Dorsolateral prefrontal cortex (tissue), 120 donors: ENCODE measurements at regions of chr20 and their contacts with region 1.

Region 1: GRCh38 chr20:25539742-25540672 is 45.3 kb downstream of the NINL start:
- DNase-seq: peak in 8 of 10 donors; percentile 39 to 71 (median 60)
- H3K4me3 ChIP-seq: peak overlapping the region; percentile 31 to 69 (median 54)
- H3K27ac ChIP-seq: peak overlapping the region in 52 of 59 donors; percentile 1 to 86 (median 64)
- H3K27me3 ChIP-seq: no peaks in the 10 kb centered on the region
- CTCF ChIP-seq: peak; percentile 36 to 77 (median 60)

Region 2: GRCh38 chr20:25254986-25255680 is 284.9 kb before region 1 on chr20:
- intact Hi-C with region 1: loop called in 1 of 2 experiments (anchors 10 kb)
- DNase-seq: peak in 6 of 10 donors; percentile 58 to 78 (median 68)
- H3K4me3 ChIP-seq: peak overlapping the region in 9 of 59 donors; percentile 0 to 31 (median 8)
- H3K27ac ChIP-seq: peak overlapping the region in 50 of 59 donors; percentile 5 to 94 (median 59)
- H3K27me3 ChIP-seq: no peaks in the 10 kb centered on the region
- CTCF ChIP-seq: peak in 35 of 56 donors; percentile 10 to 62 (median 29)

Region 3: DNA sequence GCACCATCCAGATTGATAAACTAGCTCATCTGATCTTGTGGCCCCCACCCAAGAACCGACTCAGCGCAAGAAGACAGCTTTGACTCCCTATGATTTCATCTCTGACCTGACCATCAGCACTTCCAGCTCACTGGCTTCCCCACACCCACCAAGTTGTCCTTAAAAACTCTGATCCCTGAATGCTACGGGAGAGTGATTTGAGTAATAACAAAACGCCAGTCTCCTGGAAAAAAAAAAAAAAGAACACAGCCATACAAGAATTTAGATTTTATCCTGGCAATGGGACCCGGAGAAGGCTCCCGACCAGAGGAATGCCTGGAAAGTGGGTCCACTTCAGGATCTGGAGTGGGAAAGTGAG is 212.2 kb before region 1 on chr20:
- intact Hi-C with region 1: loop called in 1 of 2 experiments (anchors 5 kb)
- DNase-seq: no peak
- H3K4me3 ChIP-seq: no peak overlapping the region
- H3K27ac ChIP-seq: no peak overlapping the region
- H3K27me3 ChIP-seq: no peaks in the 10 kb centered on the region
- CTCF ChIP-seq: no peak

Region 4: DNA sequence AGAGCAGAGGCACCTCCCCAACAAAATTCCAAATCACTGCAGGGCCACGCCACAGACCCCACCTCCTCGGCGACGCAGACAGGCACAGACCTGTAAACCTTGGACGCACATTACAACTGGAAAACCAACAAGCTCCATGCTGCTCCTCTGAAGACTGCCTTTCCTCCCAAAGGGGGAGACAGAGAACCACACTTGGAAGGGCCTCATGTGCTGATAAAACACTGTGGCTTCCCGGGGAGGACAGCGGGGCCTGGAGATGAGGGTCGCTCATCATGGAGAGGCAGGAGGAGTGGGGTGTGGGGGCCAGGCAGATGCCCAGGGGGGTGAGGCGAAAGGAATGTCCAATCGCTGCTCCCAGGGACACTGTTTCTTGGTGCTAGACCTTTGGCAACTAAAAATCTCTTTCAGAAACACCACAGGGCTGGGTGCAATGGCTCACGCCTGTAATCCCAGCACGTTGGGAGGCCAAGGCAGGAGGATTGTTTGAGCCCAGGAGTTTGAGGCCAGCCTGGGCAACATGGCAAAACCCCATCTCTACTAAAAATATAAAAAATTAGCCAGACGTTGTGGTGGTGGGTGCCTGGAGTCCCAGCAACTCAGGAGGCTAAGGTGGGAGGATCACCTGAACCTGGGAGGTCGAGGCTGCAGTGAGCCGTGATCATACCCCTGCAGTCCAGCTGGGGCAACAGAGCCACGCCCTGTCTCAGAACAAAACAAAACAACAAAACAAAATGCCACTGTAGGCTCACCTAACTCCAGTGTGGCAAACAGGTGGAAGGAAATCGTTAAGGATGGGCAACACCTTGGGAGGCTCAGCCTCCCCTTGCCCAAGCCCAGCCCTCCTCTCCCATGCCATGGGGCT is 203.2 kb before region 1 on chr20:
- intact Hi-C with region 1: loop called in 1 of 2 experiments (anchors 5 kb)
- DNase-seq: peak in 2 of 10 donors; percentile 57 to 66
- H3K4me3 ChIP-seq: no peak overlapping the region
- H3K27ac ChIP-seq: peak overlapping the region in 25 of 59 donors; percentile 2 to 68 (median 40)
- H3K27me3 ChIP-seq: no peaks in the 10 kb centered on the region
- CTCF ChIP-seq: peak in 55 of 56 donors; percentile 19 to 78 (median 50)